ENCODE measurements at regions of chr7 and their contacts with region 1.

Region 1: DNA sequence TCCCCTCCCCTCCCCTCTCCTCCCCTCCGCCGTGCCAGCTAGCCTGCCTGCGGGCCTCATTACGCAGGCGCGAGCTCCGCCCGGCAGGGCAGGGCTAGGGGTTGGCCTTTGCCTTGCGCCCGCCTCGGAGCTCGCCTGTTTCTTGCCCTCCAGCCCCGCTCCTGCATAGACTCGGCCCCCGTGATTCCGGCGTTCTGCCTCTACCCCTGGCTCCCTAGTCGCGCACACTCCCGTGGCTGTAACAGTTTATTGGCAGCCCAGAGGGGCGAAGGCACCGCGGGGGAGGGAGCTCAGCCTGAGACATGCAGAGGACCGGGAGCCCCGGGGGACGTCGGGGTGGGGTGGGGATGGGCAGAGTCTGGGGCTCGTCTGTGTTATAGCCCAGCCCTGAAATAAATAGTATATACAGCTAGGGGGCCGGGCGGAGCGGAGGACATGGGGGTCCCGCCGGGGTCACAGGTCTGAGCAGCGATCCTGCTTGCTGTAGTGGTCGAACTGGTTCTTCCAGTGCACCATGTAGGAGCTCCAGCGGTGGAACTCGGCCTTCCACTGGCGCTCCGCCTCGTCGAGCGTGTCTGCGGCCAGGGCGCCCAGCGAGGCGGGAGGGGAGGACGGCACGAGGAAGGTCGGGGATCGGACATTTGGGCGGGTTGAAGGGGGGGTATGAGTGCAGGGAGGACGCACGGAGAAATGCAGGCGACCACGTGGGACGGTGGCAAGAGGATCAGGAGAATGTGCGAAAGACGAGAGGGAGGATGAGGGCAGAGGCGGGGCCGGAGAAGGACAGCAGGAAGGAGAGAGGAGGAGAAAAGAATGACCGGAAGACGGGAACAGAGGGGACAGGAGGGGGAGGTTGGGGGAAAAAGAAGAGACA is 483 bp upstream of the UFSP1 start:
- DNase-seq: peak; percentile 97
- ATAC-seq: peak; percentile 95

Region 2: GRCh38 chr7:100604028-100604975 is 285.7 kb before region 1 on chr7:
- intact Hi-C with region 1: no loop called
- DNase-seq: peak; percentile 90
- ATAC-seq: peak; percentile 75

Region 3: DNA sequence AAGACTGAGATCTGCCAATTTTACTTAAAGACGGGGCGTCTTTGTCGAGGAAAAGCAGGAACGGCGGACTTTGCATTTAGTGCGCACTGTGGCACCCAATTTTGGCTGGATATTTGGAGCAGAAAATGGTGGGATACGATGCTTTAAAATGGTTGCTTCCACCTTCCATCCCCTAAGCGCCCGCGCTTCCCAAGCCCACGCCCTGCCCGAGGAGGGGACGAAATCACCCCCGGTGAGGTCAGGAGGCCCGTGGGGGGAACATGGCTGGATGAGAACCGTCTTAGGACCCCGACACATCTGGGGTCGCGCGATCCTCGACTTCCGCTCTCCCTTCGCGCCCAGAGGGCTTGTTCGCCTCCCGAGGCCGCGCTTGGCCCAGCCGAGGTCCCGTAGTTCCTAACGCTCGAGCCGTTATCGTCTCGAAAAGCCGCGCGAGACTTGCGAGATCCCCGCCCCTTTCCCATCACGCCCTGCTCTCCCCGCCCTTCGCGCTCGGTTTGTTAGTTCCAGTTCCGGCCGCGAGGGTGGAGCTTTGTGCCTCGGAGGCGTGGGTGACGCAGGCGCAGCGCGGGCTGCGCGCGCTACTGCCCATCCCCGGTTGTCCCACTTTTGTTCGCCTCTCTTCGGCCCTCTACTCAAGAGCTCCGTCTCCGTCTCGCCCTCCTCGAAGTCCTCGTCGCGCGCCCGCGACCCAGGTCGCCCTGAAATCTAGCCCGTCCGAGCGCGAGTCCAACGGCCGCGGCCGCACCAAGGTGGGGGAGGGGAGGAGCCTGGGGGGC is 15.2 kb before region 1 on chr7 and contains the start of gene SRRT:
- intact Hi-C with region 1: loop called (anchors 2 kb)
- DNase-seq: peak; percentile 100
- ATAC-seq: peak; percentile 97
- total RNA-seq, gene SRRT: 70.5 TPM

Region 4: DNA sequence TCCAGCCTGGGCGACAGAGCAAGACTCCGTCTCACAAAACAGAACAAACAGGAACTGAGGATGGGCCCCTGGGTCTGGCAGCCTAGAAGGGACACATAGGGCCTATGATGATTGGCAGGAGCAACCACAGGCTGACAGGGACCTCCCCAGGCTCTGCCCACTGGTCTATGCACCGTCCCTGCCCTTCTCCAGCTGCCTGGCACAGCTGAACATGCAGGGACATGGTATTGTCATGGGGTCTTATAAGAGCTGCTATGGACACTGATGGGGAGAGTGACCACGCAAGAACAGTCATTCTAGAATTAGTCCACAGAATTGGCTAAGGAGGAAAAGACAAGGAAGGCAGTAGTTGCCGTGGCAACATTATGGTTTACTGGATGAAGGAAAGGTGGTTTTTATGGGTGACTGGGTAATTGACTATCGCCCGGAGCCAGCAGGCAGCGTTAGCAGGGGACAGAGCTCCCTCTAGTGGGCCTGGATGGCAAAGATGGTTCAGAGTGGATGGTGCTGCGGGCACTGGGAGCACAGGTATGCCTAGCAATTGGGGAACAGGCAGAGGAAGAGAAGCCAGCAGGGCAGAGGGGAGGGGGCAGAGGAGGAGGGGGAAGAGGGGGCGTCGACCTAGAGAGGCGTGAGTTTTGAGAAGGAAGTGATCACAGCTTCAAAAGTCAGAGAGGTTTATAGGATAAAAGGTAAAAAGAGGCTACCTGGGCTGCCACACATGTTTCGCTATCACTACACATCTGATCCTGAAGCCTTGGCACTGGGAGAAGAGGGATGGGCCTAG is 187.5 kb after region 1 on chr7:
- intact Hi-C with region 1: loop called (anchors 5 kb)
- DNase-seq: peak; percentile 83
- ATAC-seq: peak; percentile 73

Measured in Right ventricle myocardium inferior (tissue), 1 donor.